ENCODE measurements at regions of chr9 and their contacts with region 1.

Region 1: DNA sequence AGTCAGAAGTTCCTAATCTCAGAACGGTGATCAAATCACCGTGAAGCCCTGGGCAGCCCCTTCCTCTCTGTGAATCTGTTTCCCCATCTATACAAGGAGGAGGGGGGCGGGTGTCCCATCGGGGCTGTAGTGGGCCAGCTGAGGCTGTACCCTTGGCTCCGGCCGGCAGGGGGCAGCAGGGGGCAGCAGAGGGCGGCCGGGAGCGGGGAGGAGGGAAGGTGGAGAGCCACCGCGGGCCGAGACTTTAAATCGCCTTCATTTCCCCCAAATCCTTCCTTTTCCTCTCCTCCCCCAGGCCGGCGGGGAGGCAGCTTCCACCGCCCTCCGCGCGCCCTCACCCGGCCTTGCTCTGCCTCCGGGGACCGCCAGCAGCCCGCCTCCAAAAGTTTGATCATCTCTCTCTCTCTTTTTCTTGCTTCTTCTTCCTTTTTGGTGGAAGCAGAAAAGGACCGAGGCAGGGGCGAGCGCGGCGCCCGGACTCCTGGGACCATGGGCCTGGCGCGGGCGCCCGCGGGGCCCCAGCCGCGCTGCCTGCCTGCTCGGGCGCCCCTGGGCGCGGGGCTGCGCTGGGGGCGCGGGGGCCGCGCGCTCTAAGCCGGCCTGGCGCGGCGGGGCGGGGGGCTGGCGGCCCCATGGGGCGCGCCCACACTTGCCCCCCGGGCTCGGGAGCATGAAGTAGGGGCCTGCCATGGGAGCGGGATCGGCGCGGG is at the start of gene COL27A1:
- DNase-seq: peak; percentile 81 to 95 (median 94)
- ATAC-seq: peak; percentile 90 to 93
- H3K4me3 ChIP-seq: peak within 1 kb of the TSS; percentile 89
- H3K27ac ChIP-seq: no peak within 1 kb of the TSS
- H3K4me1 ChIP-seq: peaks cover 2% of the 10 kb centered on the region
- H3K27me3 ChIP-seq: no peaks in the 10 kb centered on the region
- total RNA-seq, gene COL27A1: 2.6 to 8.4 (median 7.1) TPM

Region 2: GRCh38 chr9:114108016-114108833 is 47.2 kb before region 1 on chr9:
- intact Hi-C with region 1: loop called in 3 of 4 experiments (anchors 2 to 5 kb)
- DNase-seq: peak; percentile 81 to 94 (median 93)
- ATAC-seq: peak; percentile 95 to 97
- H3K4me3 ChIP-seq: no peak overlapping the region
- H3K27ac ChIP-seq: no peak overlapping the region
- H3K4me1 ChIP-seq: peaks cover 2% of the 10 kb centered on the region
- H3K27me3 ChIP-seq: no peaks in the 10 kb centered on the region

Region 3: GRCh38 chr9:114263853-114264510 is 108.6 kb after region 1 on chr9:
- intact Hi-C with region 1: loop called in 2 of 4 experiments (anchors 5 to 10 kb)
- DNase-seq: peak in 1 of 3 donors; percentile 75
- ATAC-seq: no peak
- H3K4me3 ChIP-seq: no peak overlapping the region
- H3K27ac ChIP-seq: no peak overlapping the region
- H3K4me1 ChIP-seq: no peaks in the 10 kb centered on the region
- H3K27me3 ChIP-seq: no peaks in the 10 kb centered on the region

Region 4: DNA sequence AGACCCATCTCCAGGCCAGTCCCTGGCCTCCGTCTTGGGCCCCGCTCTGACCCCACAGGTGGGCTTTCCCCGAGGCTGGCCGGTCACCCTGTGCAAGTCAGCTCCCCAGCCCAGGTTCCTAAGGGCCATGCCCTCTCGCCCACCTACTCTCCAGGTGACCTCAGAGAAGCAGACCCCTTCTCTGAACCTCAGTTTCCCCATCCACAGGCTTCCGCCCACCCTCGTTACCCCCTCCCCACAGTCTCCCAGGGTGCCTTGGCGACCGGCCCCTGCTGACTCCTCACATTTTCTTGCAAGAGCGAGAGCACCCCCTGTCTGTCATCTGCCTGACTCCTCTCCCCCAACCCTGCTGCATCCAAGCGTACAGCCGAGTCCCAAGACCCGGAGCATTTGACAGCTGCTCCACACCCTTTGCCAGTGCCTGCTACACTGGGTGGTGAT is 116.2 kb after region 1 on chr9:
- intact Hi-C with region 1: loop called in 3 of 4 experiments (anchors 1 to 10 kb)
- DNase-seq: peak; percentile 53 to 87 (median 78)
- ATAC-seq: peak; percentile 54 to 71
- H3K4me3 ChIP-seq: no peak overlapping the region
- H3K27ac ChIP-seq: no peak overlapping the region
- H3K4me1 ChIP-seq: no peaks in the 10 kb centered on the region
- H3K27me3 ChIP-seq: no peaks in the 10 kb centered on the region

Region 5: GRCh38 chr9:114291064-114291474 is 135.7 kb after region 1 on chr9:
- intact Hi-C with region 1: loop called in 2 of 4 experiments (anchors 2 to 5 kb)
- DNase-seq: peak; percentile 66 to 87 (median 87)
- ATAC-seq: peak; percentile 25 to 34
- H3K4me3 ChIP-seq: no peak overlapping the region
- H3K27ac ChIP-seq: no peak overlapping the region
- H3K4me1 ChIP-seq: no peaks in the 10 kb centered on the region
- H3K27me3 ChIP-seq: no peaks in the 10 kb centered on the region